ENCODE measurements at regions of chr2 and their contacts with region 1.

Region 1: GRCh38 chr2:111100765-111101162 is 19.9 kb upstream of the BCL2L11 start:
- DNase-seq: no peak
- ATAC-seq: no peak
- H3K4me3 ChIP-seq: no peak overlapping the region
- H3K27ac ChIP-seq: no peak overlapping the region
- H3K4me1 ChIP-seq: no peaks in the 10 kb centered on the region
- H3K27me3 ChIP-seq: no peaks in the 10 kb centered on the region

Region 2: DNA sequence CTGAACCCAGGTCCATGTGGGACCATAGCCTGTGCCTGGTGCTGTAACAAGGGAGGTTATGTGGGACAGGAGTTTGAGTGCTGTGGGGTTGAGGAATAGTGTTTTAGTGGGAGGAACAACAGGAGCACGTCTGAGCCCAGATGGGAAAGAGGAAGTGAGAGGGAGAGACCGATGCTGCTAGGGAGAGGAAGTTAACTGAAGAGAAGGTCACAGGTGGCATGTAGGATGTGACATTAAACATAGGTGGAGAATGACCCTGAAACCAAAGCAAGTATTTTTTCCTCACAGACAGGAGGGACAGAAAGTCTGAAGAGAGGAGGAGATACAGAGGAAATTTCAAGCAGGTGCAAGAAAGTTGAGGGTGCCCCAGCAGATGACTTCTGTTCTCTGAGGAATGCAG is 280.6 kb before region 1 on chr2:
- intact Hi-C with region 1: loop called in 1 of 4 experiments (anchors 10 kb)
- DNase-seq: no peak
- ATAC-seq: no peak
- H3K4me3 ChIP-seq: no peak overlapping the region
- H3K27ac ChIP-seq: no peak overlapping the region
- H3K4me1 ChIP-seq: no peaks in the 10 kb centered on the region
- H3K27me3 ChIP-seq: no peaks in the 10 kb centered on the region

Region 3: DNA sequence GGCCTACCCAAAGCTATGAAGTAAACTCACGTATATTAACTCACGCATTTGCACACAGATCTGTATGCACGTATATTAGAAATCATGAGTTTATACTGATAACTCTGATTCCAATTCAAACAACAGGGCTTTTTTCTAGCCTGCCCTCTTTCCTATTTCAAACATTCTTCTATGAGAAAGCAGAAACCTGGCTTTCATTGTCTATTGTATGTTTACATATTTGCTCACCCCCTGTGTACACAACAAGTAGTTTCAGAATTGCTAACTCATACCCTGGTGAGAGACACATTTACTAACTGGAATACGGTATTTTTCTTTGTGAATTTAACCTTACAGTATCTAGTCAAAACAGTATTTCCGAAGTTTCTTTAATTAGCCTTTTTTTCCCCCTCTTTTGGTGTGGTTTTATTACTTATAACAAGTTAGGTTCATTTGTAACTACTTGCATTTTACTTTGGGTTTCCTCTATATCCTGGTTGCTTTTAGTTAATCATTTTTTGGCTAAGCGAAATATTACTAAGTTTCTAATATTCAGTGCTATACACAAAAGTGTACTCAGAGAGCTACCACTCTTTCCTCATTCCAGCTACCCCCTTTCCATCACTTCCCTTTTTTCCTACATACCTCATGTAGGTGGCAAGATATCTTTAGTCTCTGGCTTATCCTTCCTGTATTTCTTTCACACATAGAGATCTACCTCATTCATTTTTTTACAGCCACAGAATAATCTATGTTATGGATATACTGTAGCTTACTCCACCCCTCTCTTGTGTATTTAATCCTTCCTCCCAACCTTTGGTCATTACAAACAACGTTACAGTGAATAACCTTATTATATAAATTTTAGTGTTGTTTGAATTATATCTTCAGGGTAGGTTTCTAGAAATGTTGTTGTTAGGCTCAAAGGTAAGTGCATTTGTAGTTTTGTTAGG is 92.7 kb before region 1 on chr2:
- intact Hi-C with region 1: no loop called
- DNase-seq: no peak
- ATAC-seq: no peak
- H3K4me3 ChIP-seq: no peak overlapping the region
- H3K27ac ChIP-seq: no peak overlapping the region
- H3K4me1 ChIP-seq: peaks cover 1% of the 10 kb centered on the region
- H3K27me3 ChIP-seq: no peaks in the 10 kb centered on the region

Measured in right cardiac atrium (tissue), 5 donors.